ENCODE measurements at regions of chr17 and their contacts with region 1.

Region 1: GRCh38 chr17:66200685-66201092 is 8.8 kb upstream of the CEP112 start:
- DNase-seq: peak; percentile 66
- H3K4me3 Mint-ChIP-seq: no peak overlapping the region
- H3K27ac Mint-ChIP-seq: peak overlapping the region; percentile 27
- H3K4me1 Mint-ChIP-seq: peaks cover 9% of the 10 kb centered on the region
- H3K27me3 Mint-ChIP-seq: no peaks in the 10 kb centered on the region
- CTCF ChIP-seq: peak; percentile 41

Region 2: DNA sequence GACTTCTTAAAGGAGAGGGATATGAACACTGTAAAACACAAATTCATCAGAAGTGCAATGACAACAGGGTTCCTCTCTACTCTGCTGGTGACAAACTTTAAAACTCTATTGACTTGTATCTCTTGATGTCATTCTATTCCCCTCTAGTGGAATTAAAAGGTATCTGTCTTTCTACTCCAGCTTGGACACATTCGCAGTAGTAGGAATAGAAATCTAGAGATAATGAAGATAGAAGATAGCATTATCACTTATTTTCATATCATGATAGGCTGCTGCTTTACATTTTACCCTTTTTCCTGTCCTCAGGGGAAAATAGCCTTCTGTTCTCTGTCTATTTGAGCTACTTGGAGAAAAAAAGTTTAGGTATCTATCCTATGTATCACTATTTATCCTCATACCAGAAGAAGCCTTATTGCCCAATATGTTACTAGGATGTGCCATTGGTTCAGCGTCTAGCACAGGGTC is 424.7 kb after region 1 on chr17:
- CTCF ChIA-PET with region 1: interaction called, 4 read pairs
- intact Hi-C with region 1: loop called (anchors 5 kb)
- DNase-seq: no peak
- H3K4me3 Mint-ChIP-seq: no peak overlapping the region
- H3K27ac Mint-ChIP-seq: no peak overlapping the region
- H3K4me1 Mint-ChIP-seq: peaks cover 9% of the 10 kb centered on the region
- H3K27me3 Mint-ChIP-seq: no peaks in the 10 kb centered on the region
- CTCF ChIP-seq: peak; percentile 31

Region 3: DNA sequence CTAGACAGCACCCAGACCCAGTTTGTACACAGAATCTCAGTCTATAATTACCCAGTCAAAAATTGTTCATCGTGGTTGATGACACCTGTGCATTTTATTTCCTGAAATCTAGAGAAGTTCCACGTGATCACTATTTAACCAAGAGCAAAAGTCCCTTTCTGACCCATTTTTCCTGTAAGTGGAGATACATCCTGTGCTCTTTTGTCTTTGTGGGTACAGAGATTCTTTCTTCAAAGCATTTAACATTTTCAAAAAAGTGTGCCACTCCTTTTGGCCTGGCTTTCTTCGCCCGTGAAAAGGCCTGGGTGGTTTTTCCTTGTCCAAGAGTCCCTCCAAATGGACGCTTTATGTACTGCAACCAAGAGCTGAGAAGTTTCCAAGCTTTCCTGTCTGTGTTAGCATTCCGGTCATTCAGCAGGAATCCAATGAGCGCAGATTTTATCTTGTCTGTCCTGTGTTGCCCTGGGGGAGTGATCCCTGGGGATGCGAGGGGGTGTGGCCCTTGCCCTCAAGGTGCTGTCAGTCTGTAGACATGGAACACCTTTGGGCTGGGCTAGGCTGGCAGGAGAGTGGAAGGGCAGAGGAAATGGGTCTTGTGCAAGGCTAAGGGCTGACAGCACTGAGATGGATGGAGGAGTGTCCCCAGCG is 473.1 kb after region 1 on chr17:
- CTCF ChIA-PET with region 1: interaction called, 3 read pairs
- intact Hi-C with region 1: loop called (anchors 5 kb)
- DNase-seq: peak; percentile 57
- H3K4me3 Mint-ChIP-seq: no peak overlapping the region
- H3K27ac Mint-ChIP-seq: no peak overlapping the region
- H3K4me1 Mint-ChIP-seq: peaks cover 50% of the 10 kb centered on the region
- H3K27me3 Mint-ChIP-seq: no peaks in the 10 kb centered on the region
- CTCF ChIP-seq: peak; percentile 66

Region 4: DNA sequence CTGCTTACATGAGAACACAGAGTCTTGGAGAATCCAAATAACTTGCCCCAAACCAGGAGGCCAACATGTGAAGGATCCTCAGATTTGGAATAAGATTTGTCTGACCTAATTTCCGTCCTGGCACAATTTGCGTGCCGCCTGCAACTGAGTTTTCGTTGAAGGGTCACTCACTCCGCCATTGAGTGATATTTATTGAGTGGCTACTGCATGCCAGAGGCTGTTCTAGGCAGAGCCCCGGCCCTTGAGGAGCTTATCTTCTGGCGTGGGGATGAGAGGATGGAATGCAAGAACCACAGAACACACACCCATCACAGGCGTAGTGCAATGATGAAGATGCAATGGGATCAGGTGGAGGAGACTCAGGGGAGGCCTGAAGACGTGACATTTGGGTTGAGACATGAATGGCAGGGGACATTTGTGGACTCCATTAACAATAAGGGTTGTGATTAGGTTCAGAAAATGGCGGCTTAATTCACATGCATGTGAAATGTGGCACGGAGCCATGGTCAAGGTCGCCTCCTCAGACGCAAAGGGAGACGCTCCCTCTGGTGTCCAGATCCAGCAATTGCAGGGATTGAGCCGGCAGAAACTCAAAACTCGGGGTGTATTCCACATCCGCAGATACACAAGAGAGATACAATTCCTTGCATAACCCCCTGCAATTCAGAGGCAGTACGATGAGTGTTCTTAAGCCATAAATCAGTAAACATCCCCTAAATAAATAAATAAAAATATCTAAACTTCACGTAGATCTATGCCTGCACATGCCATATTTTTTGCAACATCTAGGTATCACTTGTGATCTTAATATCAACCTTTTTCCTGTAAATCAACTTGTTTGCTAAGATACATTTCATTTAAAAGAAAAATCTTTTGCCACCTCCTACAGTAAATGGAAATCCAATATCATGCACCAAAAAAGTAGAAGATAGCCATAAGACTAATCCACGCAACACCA is 705.9 kb after region 1 on chr17:
- CTCF ChIA-PET with region 1: no interaction called
- intact Hi-C with region 1: loop called (anchors 10 kb)
- DNase-seq: peak; percentile 81
- H3K4me3 Mint-ChIP-seq: no peak overlapping the region
- H3K27ac Mint-ChIP-seq: peak overlapping the region; percentile 12
- H3K4me1 Mint-ChIP-seq: peaks cover 41% of the 10 kb centered on the region
- H3K27me3 Mint-ChIP-seq: peaks cover 10% of the 10 kb centered on the region
- CTCF ChIP-seq: peak; percentile 78

Measured in Calu3 (cell line).